ENCODE measurements at regions of chr17 and their contacts with region 1.

Region 1: GRCh38 chr17:8941520-8941919 is 24.0 kb downstream of the PIK3R5 start:
- DNase-seq: peak; percentile 86
- ATAC-seq: peak; percentile 76
- H3K4me3 Mint-ChIP-seq: peak overlapping the region; percentile 72
- H3K27ac Mint-ChIP-seq: peak overlapping the region; percentile 92
- H3K4me1 Mint-ChIP-seq: peaks cover 65% of the 10 kb centered on the region
- H3K27me3 Mint-ChIP-seq: no peaks in the 10 kb centered on the region

Region 2: DNA sequence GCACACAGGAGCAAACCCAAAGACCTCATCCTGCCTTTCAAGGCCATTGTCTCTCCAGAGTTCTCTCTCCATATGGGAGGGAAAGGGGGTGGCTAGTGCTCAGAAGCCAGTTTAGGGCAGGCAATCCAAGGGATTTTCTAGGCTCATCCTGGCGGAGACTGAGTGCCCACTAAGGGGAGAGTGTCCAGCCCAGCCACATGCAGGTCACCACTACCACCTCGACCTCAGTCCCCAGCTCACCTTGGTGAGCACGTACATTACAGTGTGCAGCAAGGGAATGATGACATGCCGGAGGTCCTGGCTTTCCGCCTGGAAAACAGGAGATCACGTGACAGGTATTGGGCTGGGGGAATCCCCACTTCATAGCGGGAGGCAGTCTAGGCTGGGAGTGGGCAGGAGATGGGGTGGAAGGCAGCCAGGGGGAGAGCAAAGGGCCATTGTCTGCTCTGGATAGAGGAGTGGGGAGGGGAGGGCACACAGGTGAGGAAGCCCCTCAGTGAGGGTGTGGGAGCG is 103.9 kb before region 1 on chr17:
- CTCF ChIA-PET with region 1: no interaction called
- DNase-seq: peak; percentile 19
- ATAC-seq: no peak
- H3K4me3 Mint-ChIP-seq: no peak overlapping the region
- H3K27ac Mint-ChIP-seq: no peak overlapping the region
- H3K4me1 Mint-ChIP-seq: no peaks in the 10 kb centered on the region
- H3K27me3 Mint-ChIP-seq: no peaks in the 10 kb centered on the region

Region 3: DNA sequence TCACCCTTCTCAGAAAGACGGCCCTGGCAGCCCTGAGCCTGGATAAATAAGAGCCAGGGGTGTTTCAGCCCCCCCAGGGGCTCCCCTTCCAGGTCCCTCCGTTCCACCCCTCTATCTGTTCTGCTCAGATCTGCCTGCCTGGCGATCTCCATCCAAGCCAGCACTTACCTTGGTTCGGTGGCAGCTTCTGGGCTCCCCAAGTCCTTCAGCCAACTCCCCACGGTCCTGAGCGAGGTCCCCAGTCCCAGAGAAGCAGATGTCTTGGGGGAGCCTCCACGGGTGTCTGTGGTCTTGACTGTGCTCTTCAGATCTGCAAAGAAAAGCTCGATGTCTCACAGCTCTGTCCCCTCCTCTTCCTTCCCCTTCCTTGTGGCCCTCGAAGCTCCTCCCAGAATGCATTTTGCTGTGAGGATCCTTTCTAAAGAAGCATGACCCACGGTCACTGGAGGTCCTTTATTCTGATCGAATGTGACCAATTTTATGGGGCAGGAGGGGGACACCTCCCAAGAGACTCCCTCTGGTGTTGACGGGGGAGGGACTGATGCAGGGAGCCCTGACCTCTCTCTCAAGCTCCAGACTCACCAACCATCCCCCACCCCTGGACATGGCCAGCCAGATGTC is 74.0 kb before region 1 on chr17 and contains the start of gene PIK3R6:
- CTCF ChIA-PET with region 1: no interaction called
- DNase-seq: no peak
- ATAC-seq: peak; percentile 66
- H3K4me3 Mint-ChIP-seq: peak within 1 kb of the TSS; percentile 74
- H3K27ac Mint-ChIP-seq: peak within 1 kb of the TSS; percentile 71
- H3K4me1 Mint-ChIP-seq: peaks cover 34% of the 10 kb centered on the region
- H3K27me3 Mint-ChIP-seq: no peaks in the 10 kb centered on the region
- total RNA-seq, gene PIK3R6: 1.3 to 4.9 TPM

Region 4: DNA sequence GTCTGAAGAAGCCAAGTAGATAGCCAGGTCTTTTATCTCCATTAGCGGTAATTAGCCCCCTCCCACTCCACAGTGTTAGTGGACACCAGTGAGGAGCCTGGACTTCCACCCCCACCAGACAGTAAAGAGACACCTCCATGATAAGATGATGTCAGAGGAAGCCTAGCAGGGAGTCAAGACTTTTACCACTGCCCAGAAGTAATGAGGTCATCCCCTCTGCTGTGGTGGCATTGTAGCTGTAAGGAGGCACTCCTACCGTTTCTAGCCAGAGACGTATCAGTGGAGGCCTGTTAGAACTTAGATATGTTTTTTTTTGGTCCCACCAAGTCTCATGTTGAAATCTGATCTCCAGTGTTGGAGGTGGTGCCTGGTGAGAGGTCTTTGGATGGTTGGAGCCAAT is 14.1 kb before region 1 on chr17:
- CTCF ChIA-PET with region 1: no interaction called
- DNase-seq: no peak
- ATAC-seq: no peak
- H3K4me3 Mint-ChIP-seq: no peak overlapping the region
- H3K27ac Mint-ChIP-seq: no peak overlapping the region
- H3K4me1 Mint-ChIP-seq: peaks cover 5% of the 10 kb centered on the region
- H3K27me3 Mint-ChIP-seq: no peaks in the 10 kb centered on the region

Region 5: DNA sequence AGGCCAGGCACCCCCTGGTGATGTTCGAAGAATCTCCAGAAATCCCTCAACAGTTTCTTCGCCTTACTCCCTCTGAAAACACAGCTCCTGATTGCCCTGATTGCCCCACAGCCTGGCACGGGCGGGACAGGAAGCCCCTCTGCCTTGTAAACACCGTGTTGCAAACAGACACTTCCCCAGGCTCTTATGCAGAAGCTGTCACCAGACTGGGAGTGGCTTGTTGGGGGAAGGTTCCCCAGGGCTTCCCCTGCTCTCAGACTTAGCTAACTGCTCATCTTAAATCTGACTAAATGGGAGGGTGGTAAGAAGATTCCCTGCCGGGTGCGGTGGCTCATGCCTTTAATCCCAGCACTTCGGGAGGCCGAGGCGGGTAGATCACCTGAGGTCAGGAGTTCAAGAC is 12.8 kb after region 1 on chr17:
- CTCF ChIA-PET with region 1: interaction called, 12 read pairs
- DNase-seq: peak; percentile 86
- ATAC-seq: peak; percentile 74
- H3K4me3 Mint-ChIP-seq: peak overlapping the region; percentile 40
- H3K27ac Mint-ChIP-seq: peak overlapping the region; percentile 90
- H3K4me1 Mint-ChIP-seq: peaks cover 94% of the 10 kb centered on the region
- H3K27me3 Mint-ChIP-seq: no peaks in the 10 kb centered on the region

Region 6: DNA sequence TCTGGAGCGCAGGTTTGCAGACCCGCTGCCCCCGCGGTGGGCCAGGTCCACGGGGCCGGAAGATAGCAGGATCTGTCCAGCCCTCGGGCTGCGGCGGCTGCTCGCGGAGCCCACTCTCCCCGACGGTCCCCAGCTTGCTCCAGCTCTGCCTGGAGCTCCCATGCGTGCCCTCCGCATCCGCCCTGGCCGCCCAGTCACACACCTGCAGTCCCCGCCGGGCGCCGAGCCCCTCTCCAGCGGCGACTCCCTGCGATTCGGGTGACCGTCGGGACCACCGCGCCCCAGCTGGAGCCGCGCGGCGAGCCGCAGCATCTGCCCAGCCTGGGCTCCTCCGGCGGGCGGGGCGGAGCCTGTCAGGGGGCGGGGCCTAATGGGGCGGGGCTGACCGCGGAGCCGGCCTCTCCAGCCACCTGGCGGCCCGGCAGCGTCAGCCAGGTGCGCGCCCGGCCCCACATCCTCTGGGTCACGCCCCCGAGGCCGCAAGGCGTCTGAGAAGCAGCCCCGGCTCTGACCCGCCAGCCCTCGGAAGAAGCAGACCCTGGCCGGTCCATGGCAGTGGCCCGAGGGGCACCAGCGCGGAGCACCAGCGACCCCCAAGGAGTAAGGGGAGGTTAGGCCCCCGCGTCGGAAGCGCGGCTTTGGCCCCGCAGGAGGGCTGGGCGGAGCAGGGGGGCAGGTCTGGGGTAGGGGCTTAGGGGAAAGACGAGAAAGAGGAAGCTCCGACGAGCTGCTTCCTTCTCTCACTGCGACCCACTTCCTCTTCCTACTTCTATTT is 24.1 kb after region 1 on chr17 and contains the start of gene PIK3R5:
- CTCF ChIA-PET with region 1: interaction called, 23 read pairs
- DNase-seq: peak; percentile 86
- ATAC-seq: peak; percentile 87
- H3K4me3 Mint-ChIP-seq: peak within 1 kb of the TSS; percentile 97
- H3K27ac Mint-ChIP-seq: peak within 1 kb of the TSS; percentile 97
- H3K4me1 Mint-ChIP-seq: peaks cover 61% of the 10 kb centered on the region
- H3K27me3 Mint-ChIP-seq: no peaks in the 10 kb centered on the region
- total RNA-seq, gene PIK3R5: 48.9 to 51.2 TPM

Measured in activated CD8-positive, alpha-beta memory T cell treated with anti-CD3 and anti-CD28 coated beads, Interleukin-2, amount 10 ng/mL, durations not matched to agents 7 days and 5 days (primary cell).